Colonic mucosa (tissue), 4 donors: ENCODE measurements at regions of chr11 and their contacts with region 1.

Region 1: DNA sequence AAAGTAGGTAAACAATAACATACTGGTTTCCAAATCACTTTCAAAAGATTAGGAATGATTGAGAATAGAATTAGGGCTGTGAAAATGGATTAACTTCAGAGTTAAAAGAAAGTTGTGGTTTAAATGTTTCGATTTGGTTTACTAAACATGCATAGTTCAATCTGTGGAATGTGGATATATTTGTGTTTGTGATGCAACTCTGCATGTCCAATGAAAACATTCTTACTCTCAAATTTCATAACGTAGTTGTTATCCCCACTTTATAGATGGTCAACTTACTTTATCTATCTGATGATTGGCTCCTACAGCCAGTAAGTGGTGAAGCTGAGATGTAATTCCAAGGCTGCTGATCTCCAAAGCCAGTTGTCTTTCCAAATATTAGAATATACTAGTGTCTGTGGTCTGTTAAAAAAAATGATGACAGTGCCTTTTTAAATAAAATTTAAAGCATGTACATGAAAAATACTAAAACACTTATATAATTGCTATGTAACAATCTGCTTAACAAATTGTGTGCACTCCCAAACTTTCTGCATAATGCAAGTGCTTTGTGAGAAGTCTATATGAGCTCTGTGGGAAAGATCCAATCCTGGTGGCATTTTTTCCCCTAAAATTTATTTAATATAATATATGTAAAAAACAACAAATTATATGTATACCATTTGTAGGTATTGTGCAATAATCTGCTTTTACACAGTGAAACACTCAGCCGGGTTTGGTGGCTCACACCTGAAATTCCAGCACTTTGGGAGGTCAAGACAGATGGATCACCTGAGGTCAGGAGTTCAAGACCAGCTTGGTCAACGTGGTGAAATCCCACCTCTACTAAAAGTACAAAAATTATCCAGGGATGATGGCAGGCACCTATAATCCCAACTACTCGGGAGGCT is 9.7 kb upstream of the SIK3 start:
- DNase-seq: no peak
- H3K4me3 ChIP-seq: no peak overlapping the region
- H3K27ac ChIP-seq: no peak overlapping the region
- H3K4me1 ChIP-seq: no peaks in the 10 kb centered on the region
- H3K27me3 ChIP-seq: no peaks in the 10 kb centered on the region
- CTCF ChIP-seq: no peak

Region 2: DNA sequence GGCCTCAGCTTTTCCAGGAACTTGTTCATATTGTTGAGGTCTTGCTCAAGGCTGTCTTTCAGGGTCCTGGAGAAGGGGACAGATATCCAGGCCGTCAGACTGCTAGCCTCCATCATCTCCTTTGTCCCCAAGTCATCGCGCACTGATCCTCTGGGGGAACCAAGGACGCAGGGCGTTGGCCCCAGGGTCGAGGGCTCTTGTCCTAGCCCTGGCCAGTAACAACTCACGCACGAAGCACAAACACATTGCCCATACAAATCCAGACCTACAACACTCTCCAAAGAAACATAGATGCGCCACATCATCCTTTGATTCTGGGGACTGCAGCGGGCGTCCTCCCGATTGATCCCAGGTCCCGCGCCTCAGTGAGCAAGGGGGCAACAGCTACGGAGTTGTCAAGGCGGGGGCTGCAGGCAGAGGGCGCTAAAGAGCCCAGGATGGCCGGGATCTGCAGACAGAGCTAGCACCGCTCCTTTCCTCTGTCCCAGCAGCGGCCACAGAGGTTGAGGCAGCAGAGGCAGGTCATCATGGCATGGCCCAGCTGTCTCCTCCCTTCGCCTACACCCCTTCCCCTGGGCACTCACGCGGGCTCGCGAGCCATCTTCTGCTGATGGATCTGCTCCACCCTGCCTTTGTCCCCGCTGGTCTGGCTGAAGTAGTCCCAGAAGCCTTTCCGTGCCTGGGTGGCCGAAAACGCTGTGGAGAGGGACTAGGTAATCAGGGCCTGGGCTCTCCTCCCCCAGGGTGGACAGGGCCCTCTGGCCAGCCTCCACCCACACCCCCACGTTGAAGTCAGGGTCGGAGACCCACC is 316.7 kb before region 1 on chr11:
- intact Hi-C with region 1: loop called (anchors 2 kb)
- DNase-seq: peak; percentile 77
- H3K4me3 ChIP-seq: no peak overlapping the region
- H3K27ac ChIP-seq: no peak overlapping the region
- H3K4me1 ChIP-seq: peaks cover 6% of the 10 kb centered on the region
- H3K27me3 ChIP-seq: no peaks in the 10 kb centered on the region
- CTCF ChIP-seq: peak; percentile 89

Region 3: GRCh38 chr11:116879800-116880625 is 227.9 kb before region 1 on chr11:
- intact Hi-C with region 1: loop called (anchors 2 kb)
- DNase-seq: no peak
- H3K4me3 ChIP-seq: no peak overlapping the region
- H3K27ac ChIP-seq: no peak overlapping the region
- H3K4me1 ChIP-seq: no peaks in the 10 kb centered on the region
- H3K27me3 ChIP-seq: no peaks in the 10 kb centered on the region
- CTCF ChIP-seq: peak; percentile 52

Region 4: DNA sequence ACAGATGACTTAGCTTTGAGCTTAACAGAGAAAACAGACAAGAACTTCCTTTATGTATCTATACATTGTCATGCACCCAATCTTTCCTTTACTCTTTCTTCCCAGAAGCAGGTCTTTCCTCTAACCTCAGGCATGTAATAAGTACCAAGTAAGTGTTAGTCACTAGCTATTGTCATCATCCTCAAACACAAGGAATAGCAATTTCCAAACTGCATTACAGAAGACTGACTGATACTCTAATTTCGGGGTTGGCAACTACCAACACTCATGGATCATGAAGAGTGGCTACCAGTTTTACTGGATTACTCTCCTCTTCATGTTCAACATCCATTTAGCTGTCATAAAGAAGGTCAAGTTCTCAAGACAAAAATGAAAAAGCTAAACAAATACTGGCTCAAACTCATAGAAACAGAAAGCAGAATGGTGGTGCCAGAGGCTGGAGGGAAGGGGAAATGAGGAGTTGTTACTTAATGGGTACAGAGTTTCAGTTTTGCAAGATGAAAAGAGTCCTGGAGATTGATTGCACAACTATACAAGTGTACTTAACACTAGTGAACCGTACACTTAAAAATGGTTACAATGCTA is 121.3 kb before region 1 on chr11:
- intact Hi-C with region 1: no loop called
- DNase-seq: no peak
- H3K4me3 ChIP-seq: no peak overlapping the region
- H3K27ac ChIP-seq: peak overlapping the region; percentile 49
- H3K4me1 ChIP-seq: peaks cover 12% of the 10 kb centered on the region
- H3K27me3 ChIP-seq: no peaks in the 10 kb centered on the region
- CTCF ChIP-seq: no peak

Region 5: DNA sequence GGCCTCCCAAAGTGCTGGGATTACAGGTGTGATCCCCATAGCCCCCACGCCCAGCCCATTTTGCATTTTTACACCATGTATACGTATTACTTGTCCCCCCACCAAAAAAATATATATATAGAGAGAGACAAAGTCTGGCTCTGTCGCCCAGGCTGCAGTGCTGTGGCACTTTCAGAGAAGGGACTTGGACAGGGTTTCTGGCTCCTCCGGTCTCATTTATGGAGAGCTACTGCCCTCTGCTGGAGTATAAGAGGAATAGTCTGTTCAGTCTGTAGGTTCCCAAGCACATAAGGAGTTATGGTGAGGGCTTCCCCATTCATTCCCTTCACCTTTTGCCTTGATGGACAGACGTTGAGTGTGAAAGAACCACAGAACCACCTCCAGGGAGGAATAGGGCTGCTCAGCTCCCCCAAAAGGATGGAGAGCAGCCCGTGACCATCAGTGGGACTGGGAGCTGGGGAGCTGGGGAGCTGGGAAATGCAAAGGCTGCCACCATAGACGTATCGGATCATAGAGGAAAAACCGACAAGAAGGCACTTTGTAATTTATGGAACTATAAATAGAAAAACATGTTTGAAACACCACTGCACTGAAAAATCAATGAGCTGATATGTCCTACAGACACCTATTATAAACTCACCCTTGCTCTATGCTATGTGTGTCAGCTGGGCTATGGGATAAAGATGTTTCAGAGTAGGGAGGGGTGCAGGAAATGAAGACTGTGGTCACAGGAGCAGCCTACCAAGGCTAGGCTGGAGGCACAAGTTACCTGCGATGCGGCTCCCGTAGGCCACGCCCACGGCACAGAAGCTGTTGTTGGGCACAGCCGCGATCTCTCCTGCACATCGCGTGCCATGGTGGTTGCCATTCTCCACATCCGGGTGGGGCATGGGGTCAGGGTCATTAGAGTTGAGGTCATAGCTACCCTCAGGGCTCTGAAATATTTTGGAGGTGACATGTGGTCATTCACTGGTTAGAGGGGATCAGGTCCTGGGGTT is 118.7 kb after region 1 on chr11:
- intact Hi-C with region 1: loop called (anchors 10 kb)
- DNase-seq: no peak
- H3K4me3 ChIP-seq: no peak overlapping the region
- H3K27ac ChIP-seq: no peak overlapping the region
- H3K4me1 ChIP-seq: peaks cover 19% of the 10 kb centered on the region
- H3K27me3 ChIP-seq: no peaks in the 10 kb centered on the region
- CTCF ChIP-seq: peak; percentile 62